AG04449 (cell line): ENCODE measurements at regions of chr20 and their contacts with region 1.

Region 1: DNA sequence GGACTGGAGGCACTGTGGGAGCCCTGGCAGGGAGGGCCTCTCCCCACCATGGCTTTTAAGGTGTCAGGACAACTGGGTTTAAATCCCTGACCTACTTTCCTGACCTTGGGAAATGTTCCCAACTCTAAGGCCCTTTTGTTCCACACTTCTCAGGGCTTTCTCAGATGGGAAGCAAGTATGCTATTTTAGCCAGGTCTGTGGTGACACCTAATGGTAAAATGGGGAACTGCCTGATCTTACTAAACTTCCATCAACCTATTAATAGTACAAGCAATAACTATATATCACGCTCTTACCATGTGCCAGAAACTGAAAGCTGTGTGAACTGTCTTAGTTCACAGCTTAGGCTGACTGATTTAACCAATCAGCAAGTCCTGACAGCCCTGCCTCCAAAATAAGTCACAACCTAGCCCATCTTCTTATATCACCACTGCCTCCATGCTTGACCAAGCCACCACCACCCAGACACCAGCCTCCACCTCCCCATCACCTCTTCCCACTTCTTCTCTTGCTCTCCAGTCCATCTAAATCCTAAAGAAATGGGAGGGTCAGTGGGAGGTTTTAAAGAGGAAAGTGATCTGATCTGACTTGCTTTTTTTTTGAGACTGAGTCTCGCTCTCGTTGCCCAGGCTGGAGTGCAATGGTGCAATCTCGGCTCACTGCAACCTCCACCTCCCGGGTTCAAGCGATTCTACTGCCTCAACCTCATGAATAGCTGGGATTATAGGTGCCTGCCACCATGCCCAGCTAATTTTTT is 6.9 kb upstream of the BLCAP start:
- DNase-seq: no peak
- H3K4me3 ChIP-seq: no peak overlapping the region
- CTCF ChIP-seq: peak; percentile 71

Region 2: GRCh38 chr20:37276494-37277252 is 257.9 kb before region 1 on chr20:
- CTCF ChIA-PET with region 1: interaction called, 283 read pairs
- POLR2A ChIA-PET with region 1: no interaction called
- DNase-seq: no peak
- H3K4me3 ChIP-seq: no peak overlapping the region
- CTCF ChIP-seq: peak; percentile 50

Region 3: DNA sequence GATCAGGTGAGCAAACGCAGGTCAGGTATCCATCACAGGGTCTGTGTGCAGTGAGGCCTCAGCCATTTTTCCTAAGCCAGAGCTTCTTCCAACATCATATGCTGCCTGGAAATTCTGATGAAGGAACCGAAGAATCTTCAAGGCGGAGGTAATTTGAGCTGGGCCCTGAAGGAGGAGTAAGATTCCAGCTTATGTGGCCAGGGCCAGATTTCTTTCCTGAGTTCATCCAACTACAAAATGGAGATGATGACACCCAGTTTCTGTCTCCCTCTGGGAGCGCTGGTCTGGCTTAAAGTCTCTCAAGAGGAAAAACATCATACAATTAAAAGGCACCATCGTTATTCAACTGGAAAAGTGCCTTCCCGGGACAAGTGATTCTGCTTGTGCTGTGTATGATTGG is 252.0 kb before region 1 on chr20:
- CTCF ChIA-PET with region 1: interaction called, 61 read pairs
- POLR2A ChIA-PET with region 1: no interaction called
- DNase-seq: no peak
- H3K4me3 ChIP-seq: no peak overlapping the region
- CTCF ChIP-seq: peak; percentile 57

Region 4: DNA sequence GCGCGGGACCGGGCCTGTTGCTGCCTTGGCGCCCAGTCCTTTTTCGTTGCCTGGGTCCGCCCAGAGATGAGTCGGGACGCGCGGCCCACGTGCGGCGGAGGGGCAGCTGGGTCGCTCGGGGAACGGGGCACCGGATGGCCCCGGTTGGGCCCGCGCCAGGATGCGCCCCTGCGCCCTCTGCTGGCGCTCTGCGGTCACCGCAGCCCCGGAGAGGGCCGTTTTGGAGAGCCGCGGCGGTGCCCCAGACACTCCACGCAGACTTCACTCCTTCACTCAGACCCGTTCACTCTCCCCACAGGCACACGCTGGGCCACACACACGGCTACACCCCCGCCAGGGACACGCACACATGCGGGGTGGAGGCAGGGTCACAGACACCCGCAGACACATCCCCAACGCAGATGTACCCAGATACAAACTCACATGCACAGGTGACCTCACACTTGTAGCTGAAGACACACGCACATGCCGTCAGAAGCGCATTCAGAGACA is 149.8 kb before region 1 on chr20:
- CTCF ChIA-PET with region 1: interaction called, 17 read pairs
- POLR2A ChIA-PET with region 1: no interaction called
- DNase-seq: no peak
- H3K4me3 ChIP-seq: peak overlapping the region; percentile 23; the same call in 1 of the 2 replicates
- CTCF ChIP-seq: peak; percentile 98

Region 5: DNA sequence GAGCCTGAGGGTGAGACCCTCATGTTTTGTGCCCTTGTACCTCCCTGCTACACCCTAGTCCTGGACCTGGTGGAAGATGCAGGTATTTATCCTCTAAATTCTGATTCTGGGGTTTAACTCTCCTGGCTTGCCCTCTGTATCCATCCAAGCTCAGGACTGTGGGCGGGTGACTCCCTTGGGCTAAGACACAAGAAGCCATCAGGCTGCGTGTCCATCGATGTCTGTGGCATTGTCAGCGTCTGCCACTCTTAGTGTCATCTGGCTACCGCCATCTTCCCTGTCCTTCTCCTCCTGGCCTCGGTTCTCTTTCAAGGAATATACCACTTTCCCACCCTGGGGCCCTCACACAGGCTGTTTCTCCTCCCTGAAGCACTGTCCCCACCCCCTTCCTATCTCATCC is 22.0 kb after region 1 on chr20:
- CTCF ChIA-PET with region 1: no interaction called
- POLR2A ChIA-PET with region 1: no interaction called
- DNase-seq: no peak
- H3K4me3 ChIP-seq: no peak overlapping the region
- CTCF ChIP-seq: no peak

Region 6: DNA sequence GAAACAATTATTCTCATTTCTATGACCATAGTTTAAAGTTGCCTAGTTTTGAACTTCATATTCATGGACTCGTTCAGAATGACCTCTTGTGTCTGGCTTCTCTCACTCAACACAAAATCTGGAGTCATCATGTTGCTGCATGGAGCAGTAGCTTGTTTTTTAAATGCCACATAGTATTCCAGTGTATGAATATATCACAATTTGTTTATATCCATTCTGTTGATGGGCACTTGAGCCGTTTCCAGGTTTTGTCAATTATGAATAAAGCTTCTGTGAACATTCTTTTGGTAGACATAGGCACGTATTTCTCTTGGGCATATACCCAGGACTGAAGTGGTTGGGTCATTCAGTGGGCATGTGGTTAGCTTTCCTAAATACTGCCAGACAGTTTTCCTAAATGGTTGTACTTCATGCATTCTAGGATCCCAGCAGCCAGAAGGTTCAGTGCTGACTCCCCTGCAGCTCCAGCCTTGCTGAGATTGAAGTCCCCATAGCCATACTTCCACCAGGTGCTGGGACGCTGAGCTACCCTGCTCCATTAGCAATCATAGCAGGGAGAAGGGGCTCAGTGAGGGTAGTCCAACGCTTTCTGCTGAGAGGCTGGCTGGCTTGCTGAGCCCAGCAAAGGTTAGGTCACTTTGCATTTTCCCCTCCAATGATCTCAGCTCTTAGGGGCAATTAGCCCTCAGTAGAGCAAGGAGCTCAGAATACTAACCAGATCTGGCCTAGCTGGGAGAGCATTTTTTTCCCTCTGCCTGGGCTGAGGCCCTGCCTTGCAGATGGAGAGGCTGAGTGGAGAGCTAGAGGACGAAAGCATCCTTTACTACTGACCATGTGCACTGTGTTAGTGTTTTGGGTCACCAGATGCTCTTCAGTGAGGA is 123.6 kb after region 1 on chr20:
- CTCF ChIA-PET with region 1: no interaction called
- POLR2A ChIA-PET with region 1: no interaction called
- DNase-seq: no peak
- H3K4me3 ChIP-seq: no peak overlapping the region
- CTCF ChIP-seq: no peak

Region 7: DNA sequence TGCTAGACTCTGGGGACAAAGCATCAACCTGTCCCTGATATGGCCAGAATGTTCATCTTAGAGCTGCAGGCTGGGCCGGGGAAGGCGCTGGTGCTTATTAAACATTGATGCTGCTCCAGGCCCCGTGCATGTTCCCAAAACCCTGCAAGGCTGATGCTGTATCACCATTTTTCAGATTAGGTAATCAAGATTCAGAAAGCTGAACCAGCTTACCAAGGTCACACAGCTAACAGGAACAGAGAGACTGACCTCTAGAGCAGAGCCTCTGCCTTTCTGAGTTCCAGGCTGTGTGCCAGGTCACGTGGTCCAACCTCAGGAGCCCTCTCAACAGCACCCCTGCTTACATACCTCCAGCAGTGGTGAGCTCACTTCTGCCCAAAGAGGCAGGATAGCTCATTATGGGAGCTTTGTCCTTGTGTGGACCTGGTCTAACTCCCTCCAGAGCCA is 352.3 kb after region 1 on chr20:
- CTCF ChIA-PET with region 1: no interaction called
- POLR2A ChIA-PET with region 1: no interaction called
- DNase-seq: no peak
- H3K4me3 ChIP-seq: no peak overlapping the region
- CTCF ChIP-seq: no peak